ENCODE measurements at regions of chr10 and their contacts with region 1.

Region 1: DNA sequence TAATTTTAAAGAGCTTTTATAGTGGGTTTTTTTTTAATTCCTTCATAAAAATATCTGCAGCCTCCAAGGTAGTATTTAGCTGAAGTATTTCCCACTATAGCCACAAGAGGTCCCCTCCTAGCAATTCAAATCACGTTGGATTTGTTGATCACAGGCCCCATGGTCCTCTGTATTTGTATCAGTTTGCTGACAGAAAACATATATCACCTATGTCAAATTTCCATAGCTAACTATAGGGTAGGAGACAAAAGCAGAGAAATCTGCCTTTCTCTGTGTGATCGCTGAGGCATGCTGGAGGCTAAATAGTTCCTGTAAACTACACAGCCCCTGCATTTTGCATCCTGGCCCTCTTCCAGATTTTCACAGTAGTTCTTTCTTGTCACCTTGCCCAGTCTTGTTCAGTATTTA is 1.7 kb upstream of the CTNNA3 start:
- DNase-seq: peak; percentile 62
- H3K4me3 ChIP-seq: no peak overlapping the region
- H3K27ac ChIP-seq: no peak overlapping the region
- H3K4me1 ChIP-seq: no peaks in the 10 kb centered on the region
- H3K27me3 ChIP-seq: 0 out of 2 replicates have a peak, but pooled peaks cover 12% of the 10 kb centered on the region
- CTCF ChIP-seq: peak; percentile 68
- EP300 ChIP-seq: no peak
- RAD21 ChIP-seq: peak; percentile 66

Region 2: DNA sequence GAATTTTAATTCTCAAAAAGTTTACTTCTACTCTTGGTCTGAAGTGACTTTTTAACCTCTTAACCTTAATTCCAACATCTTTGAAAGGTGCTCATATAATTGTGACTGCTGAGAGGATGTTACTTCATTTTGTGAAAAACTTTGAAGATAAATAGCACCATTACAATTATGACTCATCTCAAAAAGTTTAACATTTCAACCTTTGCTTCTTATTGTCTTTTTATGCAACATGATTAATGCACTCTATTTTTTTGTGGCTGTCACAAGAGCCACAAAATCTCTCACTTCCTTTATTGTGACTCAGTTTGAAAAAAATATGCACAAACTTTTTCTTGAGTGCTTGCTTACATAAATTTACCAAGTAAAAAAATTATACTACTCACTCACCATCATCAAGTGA is 388.8 kb before region 1 on chr10:
- CTCF ChIA-PET with region 1: no interaction called
- POLR2A ChIA-PET with region 1: no interaction called
- DNase-seq: no peak
- H3K4me3 ChIP-seq: no peak overlapping the region
- H3K27ac ChIP-seq: no peak overlapping the region
- H3K4me1 ChIP-seq: no peaks in the 10 kb centered on the region
- H3K27me3 ChIP-seq: no peaks in the 10 kb centered on the region
- CTCF ChIP-seq: no peak
- EP300 ChIP-seq: no peak
- RAD21 ChIP-seq: no peak

Region 3: GRCh38 chr10:67527354-67527753 is 170.4 kb before region 1 on chr10:
- CTCF ChIA-PET with region 1: no interaction called
- POLR2A ChIA-PET with region 1: no interaction called
- DNase-seq: no peak
- H3K4me3 ChIP-seq: no peak overlapping the region
- H3K27ac ChIP-seq: no peak overlapping the region
- H3K4me1 ChIP-seq: no peaks in the 10 kb centered on the region
- H3K27me3 ChIP-seq: no peaks in the 10 kb centered on the region; the same call in 1 of the 2 replicates
- CTCF ChIP-seq: no peak
- EP300 ChIP-seq: no peak
- RAD21 ChIP-seq: no peak

Region 4: DNA sequence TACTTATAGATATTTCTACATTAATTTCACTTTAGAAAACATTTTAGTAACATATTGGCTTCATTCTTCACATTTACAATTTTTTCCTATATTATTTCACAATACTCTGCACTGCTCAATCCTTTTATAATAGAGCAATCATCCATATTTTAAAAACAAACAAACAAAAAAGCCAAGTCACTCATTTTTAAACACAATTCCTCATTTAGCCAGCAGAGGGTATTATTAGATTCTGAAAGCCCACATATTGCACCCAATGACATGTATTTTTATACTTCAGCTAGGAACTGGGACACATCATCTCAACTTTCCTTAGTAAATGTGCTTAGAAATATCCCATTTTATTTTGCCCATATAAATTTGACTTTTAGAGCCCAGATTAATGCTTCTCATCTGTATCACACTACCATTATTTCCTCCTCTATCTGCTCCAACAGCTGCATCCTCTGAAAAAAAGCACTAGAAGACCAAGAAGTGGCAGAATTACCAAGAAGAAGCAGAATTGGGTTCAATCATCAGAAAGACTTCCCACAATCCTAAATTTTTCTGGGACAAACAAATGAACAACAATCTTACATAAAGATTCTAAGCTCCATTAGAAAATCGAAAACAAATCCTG is 31.2 kb before region 1 on chr10:
- CTCF ChIA-PET with region 1: interaction called, 17 read pairs
- POLR2A ChIA-PET with region 1: no interaction called
- DNase-seq: peak; percentile 26
- H3K4me3 ChIP-seq: no peak overlapping the region; a peak in 1 of 4 replicates
- H3K27ac ChIP-seq: no peak overlapping the region
- H3K4me1 ChIP-seq: no peaks in the 10 kb centered on the region
- H3K27me3 ChIP-seq: no peaks in the 10 kb centered on the region
- CTCF ChIP-seq: peak; percentile 62
- EP300 ChIP-seq: no peak
- RAD21 ChIP-seq: peak; percentile 58

Region 5: DNA sequence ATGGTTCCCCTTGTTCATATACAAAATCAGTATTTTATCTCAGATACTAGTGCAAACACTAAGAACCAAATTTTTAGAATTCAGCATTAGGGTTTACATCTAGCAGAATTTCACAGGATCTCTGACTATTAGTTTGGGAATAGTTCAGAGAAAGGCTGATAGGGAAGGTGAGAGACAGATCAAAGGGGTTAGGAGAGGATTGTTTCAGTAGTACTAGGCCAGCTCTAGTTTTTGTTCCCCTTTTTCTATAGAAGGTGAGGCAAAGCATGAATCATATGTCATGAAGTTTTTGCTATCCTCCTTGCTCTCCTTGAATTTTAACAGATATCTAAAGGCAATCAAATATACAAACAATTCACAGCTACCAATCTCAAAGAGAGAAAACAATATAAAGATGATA is 24.4 kb after region 1 on chr10:
- CTCF ChIA-PET with region 1: interaction called, 10 read pairs
- POLR2A ChIA-PET with region 1: no interaction called
- DNase-seq: no peak
- H3K4me3 ChIP-seq: no peak overlapping the region
- H3K27ac ChIP-seq: no peak overlapping the region
- H3K4me1 ChIP-seq: no peaks in the 10 kb centered on the region
- H3K27me3 ChIP-seq: 0 out of 2 replicates have a peak, but pooled peaks cover 7% of the 10 kb centered on the region
- CTCF ChIP-seq: no peak
- EP300 ChIP-seq: no peak
- RAD21 ChIP-seq: no peak

Region 6: DNA sequence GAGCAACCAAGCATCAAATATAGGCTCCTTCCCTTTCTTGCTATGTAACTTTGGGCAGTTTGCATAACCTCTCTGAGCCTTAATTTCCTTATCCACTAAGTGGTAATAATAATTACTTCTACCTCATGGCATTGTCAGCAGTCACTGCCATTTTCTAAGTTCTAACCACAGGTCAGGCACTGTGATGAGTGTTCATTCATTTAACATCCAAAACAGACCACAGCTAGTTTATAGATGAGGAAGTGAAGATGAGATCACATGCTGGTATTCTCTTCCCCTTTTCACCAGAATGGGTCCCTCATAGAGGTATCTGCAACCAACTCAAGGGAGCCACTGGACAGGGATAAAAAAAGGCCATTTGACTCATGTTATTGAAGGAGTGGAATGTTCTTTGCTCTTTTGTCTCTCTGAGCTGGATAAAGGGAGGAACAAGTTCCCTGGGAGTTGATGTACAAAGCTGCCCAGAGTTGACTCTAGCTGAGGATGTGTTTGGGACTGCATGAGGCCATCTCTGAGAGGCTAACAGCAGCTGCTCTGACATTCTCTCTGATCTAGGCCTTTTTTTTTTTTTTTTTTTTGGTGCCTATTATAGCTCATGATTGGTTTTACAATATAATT is 75.3 kb after region 1 on chr10:
- CTCF ChIA-PET with region 1: interaction called, 185 read pairs
- POLR2A ChIA-PET with region 1: no interaction called
- DNase-seq: no peak
- H3K4me3 ChIP-seq: no peak overlapping the region
- H3K27ac ChIP-seq: no peak overlapping the region
- H3K4me1 ChIP-seq: no peaks in the 10 kb centered on the region
- H3K27me3 ChIP-seq: no peaks in the 10 kb centered on the region
- CTCF ChIP-seq: no peak
- EP300 ChIP-seq: no peak
- RAD21 ChIP-seq: no peak

Region 7: GRCh38 chr10:67788025-67788886 is 90.5 kb after region 1 on chr10:
- CTCF ChIA-PET with region 1: interaction called, 19 read pairs
- POLR2A ChIA-PET with region 1: no interaction called
- DNase-seq: peak; percentile 37
- H3K4me3 ChIP-seq: peak overlapping the region in 1 of 2 experiments; percentile 23; a peak in 1 of 4 replicates
- H3K27ac ChIP-seq: no peak overlapping the region
- H3K4me1 ChIP-seq: peaks cover 0 to 12% of the 10 kb centered on the region in 2 experiments; a peak in 1 of 4 replicates
- H3K27me3 ChIP-seq: no peaks in the 10 kb centered on the region
- CTCF ChIP-seq: peak; percentile 51
- EP300 ChIP-seq: no peak
- RAD21 ChIP-seq: peak; percentile 53